Thyroid gland (tissue), 4 donors: ENCODE measurements at regions of chr15 and their contacts with region 1.

Region 1: DNA sequence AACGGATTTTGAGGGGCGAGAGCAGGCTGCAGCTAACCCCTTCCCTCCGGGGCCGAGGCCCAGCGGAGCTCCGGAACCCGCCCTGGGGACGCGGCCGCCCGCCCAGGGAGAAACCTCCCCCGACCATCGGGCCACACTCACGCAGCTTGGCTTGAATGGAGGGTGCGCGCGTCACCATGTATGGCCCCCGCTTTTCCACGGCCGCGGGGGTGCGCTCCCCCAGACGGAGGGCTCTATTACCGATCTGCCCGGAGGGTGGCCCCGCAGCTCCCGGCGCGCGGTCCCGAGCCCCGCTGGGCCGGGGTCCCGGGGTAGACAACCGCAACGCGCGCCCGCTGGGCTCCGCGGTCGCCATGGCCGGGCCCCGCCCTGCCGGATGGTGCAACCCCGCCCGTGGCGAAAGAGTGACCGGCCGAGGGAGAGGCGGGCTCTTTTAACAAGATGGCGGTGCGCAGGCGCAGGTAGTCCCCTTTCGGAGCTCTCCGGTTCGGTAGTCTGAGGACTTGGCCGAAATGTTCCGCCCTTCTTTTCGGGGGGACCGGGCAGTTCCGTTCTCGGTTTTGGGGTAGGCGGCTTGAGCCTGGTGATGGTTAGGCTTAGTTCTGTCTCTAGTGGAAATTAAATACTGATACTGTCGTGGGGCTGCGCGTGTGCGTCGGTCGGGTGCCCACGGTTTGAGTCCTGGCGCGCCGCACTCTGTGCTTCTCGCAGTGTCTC is at the start of gene FAM219B:
- DNase-seq: peak; percentile 93 to 96
- H3K4me3 ChIP-seq: peak within 1 kb of the TSS; percentile 21 to 98 (median 96)
- H3K27ac ChIP-seq: peak within 1 kb of the TSS; percentile 87 to 97 (median 93)
- H3K4me1 ChIP-seq: peaks cover 10 to 20% of the 10 kb centered on the region in 2 donors
- H3K27me3 ChIP-seq: no peaks in the 10 kb centered on the region
- CTCF ChIP-seq: no peak
- POLR2A ChIP-seq: peak; percentile 64 to 93
- total RNA-seq, gene FAM219B: 72.1 to 136 (median 88.2) TPM

Region 2: DNA sequence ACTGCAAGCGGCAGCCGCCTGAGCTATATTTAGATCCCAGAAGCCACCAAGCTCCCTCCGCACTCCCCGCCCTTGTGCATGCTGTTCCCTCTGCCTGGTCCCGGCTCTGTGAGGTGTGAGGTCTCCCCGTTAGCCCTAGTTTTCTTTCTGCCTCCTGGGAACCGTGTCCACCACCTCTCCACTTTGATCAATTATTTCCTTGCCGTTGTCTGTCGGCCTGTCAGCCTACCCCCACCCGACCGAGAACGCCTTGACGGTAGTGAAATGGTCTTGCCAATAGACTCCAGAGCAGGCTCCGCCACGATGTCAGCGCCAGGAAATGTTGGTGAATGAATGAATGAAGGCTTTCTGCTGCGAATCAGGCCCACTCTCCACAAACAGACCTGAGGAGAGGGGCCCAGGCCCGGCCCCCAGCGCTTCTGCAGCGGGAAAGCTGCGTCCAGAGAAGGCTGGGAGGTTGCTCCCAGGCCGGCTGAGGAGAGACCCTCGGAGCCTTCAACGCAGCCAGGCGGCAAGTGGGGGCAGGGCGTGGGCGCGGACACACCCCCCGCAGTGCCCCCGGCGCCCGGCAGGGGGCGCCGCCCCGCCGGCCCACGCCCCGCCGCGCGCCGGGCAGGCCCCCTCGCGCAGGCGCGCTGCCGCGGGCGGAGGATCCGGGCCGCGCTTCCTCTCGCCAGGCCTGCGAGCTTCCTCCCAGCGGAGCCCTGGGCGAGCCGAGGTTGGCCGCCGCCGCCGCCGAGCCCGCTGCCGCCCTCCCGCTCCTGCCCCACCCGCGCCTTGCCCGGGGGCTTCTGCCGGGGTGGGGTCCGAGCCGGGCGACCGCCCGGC is 125.0 kb before region 1 on chr15 and contains the start of gene CSK:
- intact Hi-C with region 1: loop called (anchors 2 kb)
- DNase-seq: peak; percentile 67 to 76
- H3K4me3 ChIP-seq: peak within 1 kb of the TSS; percentile 62 to 87 (median 71)
- H3K27ac ChIP-seq: peak within 1 kb of the TSS; percentile 20 to 80 (median 58)
- H3K4me1 ChIP-seq: peaks cover 39 to 61% of the 10 kb centered on the region in 2 donors
- H3K27me3 ChIP-seq: no peaks in the 10 kb centered on the region
- CTCF ChIP-seq: peak in 3 of 6 experiments; percentile 64 to 79 (median 70)
- POLR2A ChIP-seq: peak; percentile 43 to 69
- total RNA-seq, gene CSK: 18.2 to 24.3 (median 20.3) TPM

Region 3: DNA sequence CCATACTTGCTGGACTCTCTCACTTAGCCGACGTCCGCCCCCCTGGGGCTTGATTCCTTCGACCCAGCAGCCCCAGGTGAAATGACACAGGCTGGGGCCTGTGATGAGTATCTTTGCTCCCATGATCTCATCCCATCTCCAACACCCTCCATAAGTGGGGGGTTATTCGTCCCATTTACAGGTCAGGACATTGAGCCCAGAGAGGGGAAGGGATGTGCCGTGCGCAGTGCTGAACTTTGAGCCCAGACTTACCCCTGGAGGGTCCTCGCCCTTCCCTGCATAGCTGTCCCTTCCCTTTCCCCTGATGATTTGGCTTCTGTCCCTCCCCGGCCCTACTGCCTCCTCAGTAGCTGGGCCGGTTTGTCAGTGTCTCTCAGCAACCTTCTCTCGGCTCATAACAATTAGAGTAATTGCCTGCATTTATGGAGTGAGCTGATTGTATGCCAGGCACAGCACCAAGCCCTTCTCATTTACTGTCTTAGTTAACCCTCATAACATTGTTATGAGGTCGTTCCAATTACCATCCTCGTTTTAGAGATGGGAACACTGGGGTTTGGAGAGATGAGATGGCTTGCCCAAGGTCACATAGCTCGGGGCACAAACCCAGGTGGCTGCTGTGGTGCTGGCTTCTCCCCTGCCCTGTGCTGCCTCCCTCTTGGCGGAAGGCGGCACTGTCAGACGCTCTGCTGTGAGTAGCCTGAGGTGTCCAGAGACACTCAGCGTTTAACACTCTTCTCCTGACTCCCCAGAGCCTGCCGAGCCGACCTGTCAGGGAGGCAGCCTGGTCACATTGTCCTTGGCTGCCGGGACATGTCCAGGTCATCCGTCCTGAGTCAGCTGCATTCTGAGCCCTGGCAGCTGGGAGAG is 89.6 kb before region 1 on chr15:
- intact Hi-C with region 1: no loop called
- DNase-seq: no peak
- H3K4me3 ChIP-seq: no peak overlapping the region
- H3K27ac ChIP-seq: no peak overlapping the region
- H3K4me1 ChIP-seq: no peaks in the 10 kb centered on the region
- H3K27me3 ChIP-seq: no peaks in the 10 kb centered on the region
- CTCF ChIP-seq: no peak
- POLR2A ChIP-seq: no peak

Region 4: GRCh38 chr15:75008629-75009326 is 102.2 kb after region 1 on chr15:
- intact Hi-C with region 1: no loop called
- DNase-seq: no peak
- H3K4me3 ChIP-seq: no peak overlapping the region
- H3K27ac ChIP-seq: no peak overlapping the region
- H3K4me1 ChIP-seq: no peaks in the 10 kb centered on the region
- H3K27me3 ChIP-seq: no peaks in the 10 kb centered on the region
- CTCF ChIP-seq: no peak
- POLR2A ChIP-seq: no peak

Region 5: GRCh38 chr15:75347222-75347878 is 440.7 kb after region 1 on chr15:
- intact Hi-C with region 1: no loop called
- DNase-seq: peak; percentile 51 to 57
- H3K4me3 ChIP-seq: peak overlapping the region; percentile 60 to 89 (median 87)
- H3K27ac ChIP-seq: peak overlapping the region; percentile 34 to 53 (median 35)
- H3K4me1 ChIP-seq: peaks cover 6 to 12% of the 10 kb centered on the region in 2 donors
- H3K27me3 ChIP-seq: no peaks in the 10 kb centered on the region
- CTCF ChIP-seq: no peak
- POLR2A ChIP-seq: peak in 1 of 2 donors; percentile 19